Activated CD4-positive, alpha-beta T cell treated with anti-CD3 and anti-CD28 coated beads for 36 hours (primary cell): ENCODE measurements at regions of chr10 and their contacts with region 1.

Region 1: GRCh38 chr10:84537447-84537931 is 209.1 kb downstream of the CCSER2 start:
- DNase-seq: peak; percentile 55
- ATAC-seq: peak; percentile 70
- H3K4me3 Mint-ChIP-seq: no peak overlapping the region
- H3K27ac Mint-ChIP-seq: no peak overlapping the region
- H3K4me1 Mint-ChIP-seq: peaks cover 23% of the 10 kb centered on the region
- H3K27me3 Mint-ChIP-seq: peaks cover 17% of the 10 kb centered on the region

Region 2: GRCh38 chr10:84139126-84140035 is 398.1 kb before region 1 on chr10 and contains the start of gene GHITM:
- CTCF ChIA-PET with region 1: interaction called, 6 read pairs
- POLR2A ChIA-PET with region 1: no interaction called
- intact Hi-C with region 1: loop called (anchors 2 to 10 kb)
- DNase-seq: peak; percentile 100
- ATAC-seq: peak; percentile 94
- H3K4me3 Mint-ChIP-seq: peak within 1 kb of the TSS; percentile 96
- H3K27ac Mint-ChIP-seq: peak within 1 kb of the TSS; percentile 100
- H3K4me1 Mint-ChIP-seq: peaks cover 32% of the 10 kb centered on the region
- H3K27me3 Mint-ChIP-seq: no peaks in the 10 kb centered on the region
- total RNA-seq, gene GHITM: 121 to 178 TPM

Region 3: GRCh38 chr10:84328418-84329195 is 208.9 kb before region 1 on chr10 and contains the start of gene CCSER2:
- CTCF ChIA-PET with region 1: interaction called, 14 read pairs
- POLR2A ChIA-PET with region 1: interaction called, 3 read pairs
- intact Hi-C with region 1: loop called in 1 of 2 experiments (anchors 1 kb)
- DNase-seq: peak; percentile 98
- ATAC-seq: peak; percentile 74
- H3K4me3 Mint-ChIP-seq: peak within 1 kb of the TSS; percentile 93
- H3K27ac Mint-ChIP-seq: peak within 1 kb of the TSS; percentile 98
- H3K4me1 Mint-ChIP-seq: peaks cover 28% of the 10 kb centered on the region
- H3K27me3 Mint-ChIP-seq: no peaks in the 10 kb centered on the region
- total RNA-seq, gene CCSER2: 61.2 to 85.2 TPM

Region 4: GRCh38 chr10:84360637-84361365 is 176.7 kb before region 1 on chr10:
- CTCF ChIA-PET with region 1: interaction called, 11 read pairs
- POLR2A ChIA-PET with region 1: no interaction called
- intact Hi-C with region 1: no loop called
- DNase-seq: no peak
- ATAC-seq: no peak
- H3K4me3 Mint-ChIP-seq: no peak overlapping the region
- H3K27ac Mint-ChIP-seq: peak overlapping the region; percentile 25
- H3K4me1 Mint-ChIP-seq: peaks cover 74% of the 10 kb centered on the region
- H3K27me3 Mint-ChIP-seq: no peaks in the 10 kb centered on the region

Region 5: GRCh38 chr10:84499846-84500245 is 37.6 kb before region 1 on chr10:
- CTCF ChIA-PET with region 1: interaction called, 16 read pairs
- POLR2A ChIA-PET with region 1: no interaction called
- intact Hi-C with region 1: no loop called
- DNase-seq: no peak
- ATAC-seq: no peak
- H3K4me3 Mint-ChIP-seq: no peak overlapping the region
- H3K27ac Mint-ChIP-seq: no peak overlapping the region
- H3K4me1 Mint-ChIP-seq: peaks cover 6% of the 10 kb centered on the region
- H3K27me3 Mint-ChIP-seq: no peaks in the 10 kb centered on the region

Region 6: DNA sequence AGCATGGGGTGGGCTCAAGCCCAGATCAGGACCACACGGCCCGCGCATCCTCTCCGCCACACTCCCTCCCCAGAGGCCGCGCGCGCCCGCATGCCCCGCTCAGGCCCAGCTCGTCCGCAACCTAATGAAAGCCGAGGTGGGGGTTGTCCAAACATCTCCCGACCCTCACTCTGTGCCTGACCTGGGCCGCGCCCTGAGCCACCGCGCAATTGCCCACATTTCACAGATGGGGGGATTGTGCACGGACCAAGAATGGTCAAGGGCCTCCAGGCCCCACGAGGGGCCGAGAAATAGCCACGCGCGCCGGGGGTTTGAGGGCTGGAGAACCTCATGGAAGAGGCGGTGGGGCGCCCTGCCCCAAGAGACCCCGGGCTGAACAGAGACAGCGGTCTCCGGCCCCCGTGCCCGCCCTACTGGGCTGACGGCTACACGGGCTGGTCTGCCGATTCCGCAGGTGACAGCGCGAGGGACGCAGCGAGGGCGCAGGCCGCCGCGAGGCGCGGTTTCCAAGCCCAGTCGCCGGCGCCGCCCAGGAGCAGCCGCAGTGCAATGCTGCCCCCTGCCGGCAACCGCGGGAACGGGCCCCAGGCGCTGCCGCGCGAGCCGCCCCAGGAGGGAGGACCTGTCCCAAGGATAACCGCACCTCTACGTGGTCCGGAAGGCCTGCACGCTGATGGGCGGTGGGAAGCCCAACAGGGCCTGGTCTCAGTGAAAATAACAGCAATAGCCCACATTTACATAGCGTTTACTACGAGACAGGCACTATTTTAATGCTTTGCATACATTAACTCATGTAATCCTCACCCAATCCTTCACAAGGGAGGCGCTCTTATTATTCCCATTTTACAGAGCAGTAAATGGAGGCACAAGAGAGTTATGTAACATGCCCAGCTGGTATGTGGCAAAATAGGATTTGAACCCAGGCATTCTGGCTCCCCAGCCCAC is 1839.6 kb after region 1 on chr10:
- CTCF ChIA-PET with region 1: interaction called, 4 read pairs
- POLR2A ChIA-PET with region 1: no interaction called
- intact Hi-C with region 1: loop called (anchors 1 to 2 kb)
- DNase-seq: peak; percentile 89
- ATAC-seq: peak; percentile 97
- H3K4me3 Mint-ChIP-seq: no peak overlapping the region
- H3K27ac Mint-ChIP-seq: no peak overlapping the region
- H3K4me1 Mint-ChIP-seq: no peaks in the 10 kb centered on the region
- H3K27me3 Mint-ChIP-seq: peaks cover 20% of the 10 kb centered on the region